Psoas muscle (tissue), 8 donors: ENCODE measurements at regions of chr11 and their contacts with region 1.

Region 1: DNA sequence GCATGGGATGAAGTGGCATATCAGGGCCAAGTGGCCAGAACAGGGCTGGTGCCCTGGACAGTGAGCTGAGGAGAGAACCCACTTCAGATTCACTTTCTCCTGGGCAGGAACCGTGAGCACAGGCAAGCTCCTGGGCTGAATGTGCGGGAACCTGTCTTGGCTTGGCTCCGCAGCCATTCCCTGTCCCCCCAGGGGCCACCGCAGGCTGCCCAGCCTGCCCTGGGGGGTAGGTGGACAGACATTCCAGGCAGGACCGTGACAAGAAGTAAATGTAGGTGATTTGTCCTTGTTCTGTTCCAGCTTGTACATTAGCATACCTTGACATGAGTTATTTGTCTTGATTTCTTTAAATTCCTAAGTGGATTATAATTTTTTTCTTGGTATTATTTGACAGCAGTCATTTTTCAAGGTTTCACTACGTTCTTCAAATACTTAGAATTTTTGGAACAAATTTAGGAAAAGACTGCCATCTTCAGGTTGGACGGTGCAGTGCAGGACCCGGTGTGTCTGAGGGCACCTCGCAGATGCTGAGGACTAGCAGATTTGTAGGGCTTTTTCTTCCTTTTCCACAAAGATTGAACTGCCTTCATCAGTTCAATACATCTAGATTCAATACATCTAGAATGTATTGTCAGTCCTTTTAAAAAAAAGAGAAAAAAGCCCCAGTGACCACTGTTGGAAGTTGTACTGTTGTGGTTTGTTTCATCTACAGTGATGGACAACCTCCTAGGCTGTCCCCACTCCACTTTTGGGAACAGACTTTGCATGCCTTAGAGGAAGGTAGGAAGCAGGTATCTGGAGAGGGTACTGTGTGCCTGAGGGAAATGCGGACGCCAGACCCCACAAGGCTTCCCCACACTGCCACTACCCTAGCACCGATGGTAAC is 115.1 kb upstream of the RASSF10 start:
- DNase-seq: peak; percentile 49 to 76
- ATAC-seq: no peak
- H3K4me3 ChIP-seq: no peak overlapping the region
- H3K27ac ChIP-seq: peak overlapping the region; percentile 70
- H3K4me1 ChIP-seq: peaks cover 54% of the 10 kb centered on the region
- H3K27me3 ChIP-seq: no peaks in the 10 kb centered on the region
- CTCF ChIP-seq: peak; percentile 91

Region 2: DNA sequence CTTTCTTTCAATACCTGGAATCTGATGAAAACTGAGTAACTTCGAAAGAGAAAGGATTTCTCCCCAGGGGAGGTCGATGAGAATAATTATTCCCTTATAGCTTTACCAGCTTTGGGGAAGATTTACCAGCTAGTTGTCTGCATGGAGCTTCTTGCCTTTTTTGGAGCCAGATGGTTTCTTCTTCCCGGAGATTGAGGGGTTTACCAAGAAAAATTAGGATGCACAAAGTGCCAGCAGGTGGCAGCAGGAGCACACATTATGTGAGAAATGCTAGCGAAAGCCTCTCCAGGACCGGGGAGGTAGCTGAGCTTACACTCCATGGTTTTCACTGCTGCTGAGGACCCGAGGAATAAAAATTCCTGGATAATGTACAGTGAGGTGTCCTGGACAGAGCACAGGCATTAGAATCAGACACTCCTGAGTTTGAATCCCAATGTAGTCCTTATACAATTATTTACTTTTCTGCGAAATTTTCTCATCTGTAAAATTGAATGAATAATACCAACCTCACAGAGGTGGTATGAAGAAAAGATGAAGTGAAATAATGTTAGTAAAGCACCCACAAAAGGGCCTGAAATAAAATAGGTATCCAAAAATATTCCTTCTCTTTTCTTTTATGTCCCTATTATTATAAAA is 562.7 kb before region 1 on chr11:
- intact Hi-C with region 1: loop called (anchors 1 to 5 kb)
- DNase-seq: peak; percentile 79 to 89
- ATAC-seq: peak; percentile 80 to 93 (median 84)
- H3K4me3 ChIP-seq: no peak overlapping the region
- H3K27ac ChIP-seq: no peak overlapping the region
- H3K4me1 ChIP-seq: no peaks in the 10 kb centered on the region
- H3K27me3 ChIP-seq: no peaks in the 10 kb centered on the region
- CTCF ChIP-seq: peak; percentile 82

Region 3: DNA sequence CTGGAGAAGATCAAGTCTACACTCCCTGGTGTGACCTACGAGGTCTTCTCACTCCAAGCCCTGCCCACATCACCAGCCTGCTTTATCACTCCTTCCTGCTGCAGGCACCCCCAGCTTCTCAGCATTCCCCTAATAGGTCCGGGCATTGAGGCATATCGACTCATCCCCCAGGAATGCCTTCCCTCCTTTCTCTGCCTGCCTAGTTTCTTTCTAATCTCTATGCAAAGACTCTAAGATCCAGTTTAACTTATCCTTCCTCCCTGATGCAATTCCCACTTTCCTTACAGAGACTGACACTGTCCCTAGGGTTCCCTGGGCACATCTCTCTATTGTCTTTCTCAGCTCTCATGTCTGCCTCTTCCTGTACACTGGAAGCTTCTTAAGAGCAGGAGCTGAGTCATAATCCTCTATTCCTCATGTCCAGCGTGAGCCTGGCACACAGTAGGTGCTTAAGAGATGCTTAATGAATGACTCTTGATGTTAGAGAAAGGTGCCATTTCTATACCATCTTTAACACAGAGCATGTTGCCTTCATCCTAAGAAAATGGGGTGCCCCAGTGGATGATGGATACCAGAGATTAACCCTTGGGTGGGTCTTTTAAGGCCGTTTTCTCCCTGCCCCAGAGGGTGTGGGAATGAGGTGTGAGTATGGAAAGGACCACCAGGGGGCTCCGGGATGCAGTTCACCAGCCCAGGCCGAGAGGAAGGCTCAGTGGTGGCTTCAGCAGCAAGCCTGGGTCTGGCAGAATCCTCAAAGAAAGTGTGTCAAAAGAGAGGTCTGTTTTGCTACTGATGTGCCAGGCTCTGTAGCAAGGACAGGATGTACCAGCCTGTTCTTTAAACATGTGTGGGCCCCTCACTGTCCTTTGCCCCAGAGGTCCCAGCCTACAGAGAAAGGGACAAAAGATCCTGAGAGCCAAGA is 482.0 kb before region 1 on chr11:
- intact Hi-C with region 1: loop called (anchors 1 to 5 kb)
- DNase-seq: peak; percentile 68 to 79
- ATAC-seq: peak; percentile 90 to 92 (median 91)
- H3K4me3 ChIP-seq: no peak overlapping the region
- H3K27ac ChIP-seq: peak overlapping the region; percentile 30
- H3K4me1 ChIP-seq: peaks cover 26% of the 10 kb centered on the region
- H3K27me3 ChIP-seq: no peaks in the 10 kb centered on the region
- CTCF ChIP-seq: peak; percentile 66

Region 4: GRCh38 chr11:12599408-12600143 is 294.5 kb before region 1 on chr11:
- intact Hi-C with region 1: loop called (anchors 2 to 5 kb)
- DNase-seq: peak; percentile 47 to 77
- ATAC-seq: peak; percentile 81 to 96 (median 86)
- H3K4me3 ChIP-seq: no peak overlapping the region
- H3K27ac ChIP-seq: no peak overlapping the region
- H3K4me1 ChIP-seq: no peaks in the 10 kb centered on the region
- H3K27me3 ChIP-seq: no peaks in the 10 kb centered on the region
- CTCF ChIP-seq: peak; percentile 81

Region 5: GRCh38 chr11:12693479-12694181 is 200.4 kb before region 1 on chr11:
- intact Hi-C with region 1: loop called in 1 of 2 experiments (anchors 5 kb)
- DNase-seq: peak; percentile 32 to 66
- ATAC-seq: peak; percentile 78 to 87 (median 84)
- H3K4me3 ChIP-seq: peak overlapping the region; percentile 55
- H3K27ac ChIP-seq: peak overlapping the region; percentile 95
- H3K4me1 ChIP-seq: peaks cover 85% of the 10 kb centered on the region
- H3K27me3 ChIP-seq: no peaks in the 10 kb centered on the region
- CTCF ChIP-seq: no peak

Region 6: GRCh38 chr11:12746593-12747097 is 147.4 kb before region 1 on chr11:
- intact Hi-C with region 1: loop called in 1 of 2 experiments (anchors 10 kb)
- DNase-seq: peak; percentile 60 to 93
- ATAC-seq: peak; percentile 74 to 82 (median 76)
- H3K4me3 ChIP-seq: peak overlapping the region; percentile 56
- H3K27ac ChIP-seq: peak overlapping the region; percentile 81
- H3K4me1 ChIP-seq: peaks cover 88% of the 10 kb centered on the region
- H3K27me3 ChIP-seq: no peaks in the 10 kb centered on the region
- CTCF ChIP-seq: peak; percentile 25